SK-N-SH (cell line): ENCODE measurements at regions of chr3 and their contacts with region 1.

Region 1: DNA sequence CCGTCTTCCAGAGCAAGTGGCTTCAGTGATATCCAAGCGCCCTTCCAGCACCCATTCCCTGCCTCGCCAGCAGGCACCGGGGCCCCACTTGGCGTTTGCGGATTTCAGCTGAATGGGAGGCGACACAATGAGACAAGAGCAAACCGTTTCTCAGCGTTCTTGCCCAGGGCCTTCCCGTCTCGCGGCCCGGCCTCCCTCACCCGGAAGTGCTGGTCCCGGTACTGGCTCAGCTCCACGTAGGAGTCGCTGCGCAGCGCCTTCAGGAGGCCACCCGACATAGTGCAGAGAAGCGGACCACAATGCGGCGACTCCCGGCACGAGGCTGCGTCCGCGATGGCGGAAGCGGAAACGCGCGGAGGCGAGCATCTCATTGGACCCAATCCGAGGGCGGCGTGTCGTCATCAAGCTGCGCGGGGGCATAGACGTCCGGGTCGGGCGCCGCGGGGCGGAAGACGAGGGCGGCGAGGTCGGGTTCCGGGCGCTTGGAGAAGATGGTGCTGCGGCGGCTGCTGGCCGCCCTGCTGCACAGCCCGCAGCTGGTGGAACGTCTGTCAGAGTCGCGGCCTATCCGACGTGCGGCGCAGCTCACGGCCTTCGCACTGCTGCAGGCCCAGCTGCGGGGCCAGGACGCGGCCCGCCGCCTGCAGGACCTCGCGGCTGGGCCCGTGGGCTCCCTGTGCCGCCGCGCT is at the start of gene NCBP2:
- DNase-seq: peak; percentile 96
- H3K4me3 ChIP-seq: peak within 1 kb of the TSS; percentile 95 to 96
- H3K27ac ChIP-seq: peak within 1 kb of the TSS; percentile 97 to 99
- H3K4me1 ChIP-seq: peaks cover 6 to 11% of the 10 kb centered on the region in 2 experiments; a peak in 3 of 4 replicates
- H3K27me3 ChIP-seq: no peaks in the 10 kb centered on the region
- CTCF ChIP-seq: peak; percentile 64
- EP300 ChIP-seq: no peak
- RAD21 ChIP-seq: peak; percentile 43
- polyA plus RNA-seq, gene NCBP2: 112 and 128 TPM in 2 replicates

Region 2: DNA sequence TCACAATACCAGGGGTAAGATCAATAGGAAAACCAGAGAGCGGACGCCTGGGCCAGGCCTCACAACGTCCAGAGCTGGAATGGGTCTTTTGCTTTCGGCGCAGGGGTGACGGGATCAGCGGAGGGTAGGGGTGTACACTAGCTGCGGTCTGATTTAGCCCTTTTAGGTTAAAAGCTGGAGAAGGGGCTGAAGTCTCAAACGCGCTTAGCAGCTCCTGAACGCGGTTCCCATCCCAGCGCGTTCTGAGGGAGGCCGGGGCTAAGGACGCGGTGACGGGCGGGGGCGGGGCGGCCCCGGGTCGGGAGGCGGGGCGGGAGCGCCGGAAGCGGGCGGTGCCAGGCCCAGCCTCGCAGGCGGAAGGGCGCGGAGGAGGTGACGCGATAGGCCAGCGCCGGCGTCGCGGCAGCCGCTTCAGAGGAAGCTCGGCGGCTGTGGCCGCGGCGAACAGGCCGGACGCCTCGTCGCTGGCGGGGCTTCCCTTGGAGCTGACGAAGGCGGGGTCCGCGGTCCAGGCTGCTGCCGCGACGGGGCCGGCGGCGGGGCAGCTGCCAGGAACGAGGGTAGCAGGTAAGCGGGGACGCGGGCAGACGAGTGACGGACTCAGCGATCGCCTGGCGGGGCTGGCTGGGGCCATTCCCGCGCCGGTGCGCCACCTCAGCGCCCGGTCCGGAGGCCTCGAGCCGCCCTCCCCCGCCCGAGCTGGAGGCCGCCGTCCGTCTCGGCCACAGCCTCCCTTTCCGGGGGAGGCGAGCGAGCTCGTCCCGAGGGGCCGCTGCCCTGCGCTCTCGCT is 74.7 kb before region 1 on chr3 and contains the start of gene SENP5:
- CTCF ChIA-PET with region 1: interaction called, 6 read pairs
- POLR2A ChIA-PET with region 1: interaction called, 18 read pairs
- DNase-seq: peak; percentile 97
- H3K4me3 ChIP-seq: peak within 1 kb of the TSS; percentile 72 to 89
- H3K27ac ChIP-seq: peak within 1 kb of the TSS; percentile 83 to 91
- H3K4me1 ChIP-seq: peaks cover 0 to 5% of the 10 kb centered on the region in 2 experiments; a peak in 2 of 4 replicates
- H3K27me3 ChIP-seq: no peaks in the 10 kb centered on the region
- CTCF ChIP-seq: no peak
- EP300 ChIP-seq: no peak
- RAD21 ChIP-seq: no peak
- polyA plus RNA-seq, gene SENP5: 7.5 and 11.8 TPM in 2 replicates

Region 3: GRCh38 chr3:196927571-196928453 is 14.6 kb before region 1 on chr3:
- CTCF ChIA-PET with region 1: interaction called, 10 read pairs
- POLR2A ChIA-PET with region 1: interaction called, 3 read pairs
- DNase-seq: no peak
- H3K4me3 ChIP-seq: no peak overlapping the region
- H3K27ac ChIP-seq: no peak overlapping the region
- H3K4me1 ChIP-seq: no peaks in the 10 kb centered on the region
- H3K27me3 ChIP-seq: no peaks in the 10 kb centered on the region
- CTCF ChIP-seq: no peak
- EP300 ChIP-seq: no peak
- RAD21 ChIP-seq: no peak